HAP-1 (cell line): ENCODE measurements at regions of chr9 and their contacts with region 1.

Region 1: DNA sequence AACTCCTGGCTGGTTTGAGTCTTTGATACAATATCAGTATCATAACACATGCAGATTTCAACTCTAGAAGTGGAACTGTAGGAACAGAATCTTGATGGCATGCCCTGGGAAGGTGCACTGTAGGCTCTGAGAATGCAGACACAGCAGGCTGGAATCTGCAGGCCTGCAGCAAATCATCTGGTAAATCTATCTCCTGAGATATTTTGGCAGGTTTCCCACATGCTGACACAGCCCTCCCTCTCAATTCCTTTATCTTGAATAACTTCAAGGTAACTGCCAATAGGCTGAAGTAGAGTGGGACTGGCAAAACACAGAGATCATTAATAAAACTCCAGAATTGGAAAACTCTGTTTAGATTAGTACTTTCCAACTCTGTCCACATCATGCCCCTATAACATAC is 177.8 kb upstream of the PCSK5 start:
- DNase-seq: no peak
- H3K4me3 ChIP-seq: no peak overlapping the region
- H3K4me1 ChIP-seq: no peaks in the 10 kb centered on the region
- H3K27me3 ChIP-seq: no peaks in the 10 kb centered on the region

Region 2: GRCh38 chr9:75601279-75601678 is 111.4 kb before region 1 on chr9:
- in situ Hi-C with region 1: loop called (anchors 25 kb)
- DNase-seq: no peak
- H3K4me3 ChIP-seq: no peak overlapping the region
- H3K4me1 ChIP-seq: no peaks in the 10 kb centered on the region
- H3K27me3 ChIP-seq: no peaks in the 10 kb centered on the region